Thyroid gland (tissue), 4 donors: ENCODE measurements at regions of chr17 and their contacts with region 1.

Region 1: GRCh38 chr17:16438557-16439302 is 23.4 kb downstream of the TRPV2 start:
- DNase-seq: peak; percentile 95 to 96
- H3K4me3 ChIP-seq: peak overlapping the region; percentile 43 to 89 (median 62)
- H3K27ac ChIP-seq: peak overlapping the region; percentile 77 to 95 (median 83)
- H3K4me1 ChIP-seq: peaks cover 34 to 38% of the 10 kb centered on the region in 2 donors
- H3K27me3 ChIP-seq: no peaks in the 10 kb centered on the region
- CTCF ChIP-seq: no peak
- POLR2A ChIP-seq: peak in 1 of 2 donors; percentile 83

Region 2: GRCh38 chr17:16329519-16330271 is 109.0 kb before region 1 on chr17:
- intact Hi-C with region 1: no loop called
- DNase-seq: peak; percentile 81 to 85
- H3K4me3 ChIP-seq: no peak overlapping the region
- H3K27ac ChIP-seq: peak overlapping the region in 2 of 3 donors; percentile 45 to 67
- H3K4me1 ChIP-seq: peaks cover 16 to 17% of the 10 kb centered on the region in 2 donors
- H3K27me3 ChIP-seq: no peaks in the 10 kb centered on the region
- CTCF ChIP-seq: no peak
- POLR2A ChIP-seq: peak in 1 of 2 donors; percentile 12

Region 3: GRCh38 chr17:16380640-16381495 is 57.9 kb before region 1 on chr17 and contains the start of gene UBB:
- intact Hi-C with region 1: loop called (anchors 5 kb)
- DNase-seq: peak; percentile 98
- H3K4me3 ChIP-seq: peak within 1 kb of the TSS; percentile 30 to 78 (median 48)
- H3K27ac ChIP-seq: peak within 1 kb of the TSS; percentile 96 to 100 (median 98)
- H3K4me1 ChIP-seq: peaks cover 19% of the 10 kb centered on the region in 2 donors
- H3K27me3 ChIP-seq: no peaks in the 10 kb centered on the region
- CTCF ChIP-seq: peak in 1 of 6 experiments; percentile 16
- POLR2A ChIP-seq: peak; percentile 97 to 99
- total RNA-seq, gene UBB: 917 to 1,584 (median 1,245) TPM